ENCODE measurements at regions of chr18 and their contacts with region 1.

Region 1: DNA sequence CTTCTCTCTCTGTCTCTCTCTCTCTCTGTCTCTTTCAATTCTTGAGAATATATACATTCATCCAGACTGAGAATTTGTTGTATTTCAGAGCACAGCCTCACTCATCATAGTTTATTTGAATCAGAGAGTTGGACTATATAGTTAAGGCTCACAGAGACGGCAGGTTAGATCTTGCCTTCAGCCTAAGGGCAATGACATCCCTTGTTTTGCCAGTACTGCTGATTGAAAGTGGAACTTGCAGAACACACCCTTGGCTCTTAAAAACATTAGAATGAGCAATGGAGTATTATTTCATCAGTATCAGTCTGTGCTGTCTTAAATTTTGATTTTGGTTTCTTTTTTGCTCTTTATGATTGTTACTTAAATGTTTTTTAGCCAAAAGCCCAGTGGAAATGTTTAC is 62.0 kb upstream of the DSG1 start:
- DNase-seq: no peak
- CTCF ChIP-seq: no peak

Region 2: DNA sequence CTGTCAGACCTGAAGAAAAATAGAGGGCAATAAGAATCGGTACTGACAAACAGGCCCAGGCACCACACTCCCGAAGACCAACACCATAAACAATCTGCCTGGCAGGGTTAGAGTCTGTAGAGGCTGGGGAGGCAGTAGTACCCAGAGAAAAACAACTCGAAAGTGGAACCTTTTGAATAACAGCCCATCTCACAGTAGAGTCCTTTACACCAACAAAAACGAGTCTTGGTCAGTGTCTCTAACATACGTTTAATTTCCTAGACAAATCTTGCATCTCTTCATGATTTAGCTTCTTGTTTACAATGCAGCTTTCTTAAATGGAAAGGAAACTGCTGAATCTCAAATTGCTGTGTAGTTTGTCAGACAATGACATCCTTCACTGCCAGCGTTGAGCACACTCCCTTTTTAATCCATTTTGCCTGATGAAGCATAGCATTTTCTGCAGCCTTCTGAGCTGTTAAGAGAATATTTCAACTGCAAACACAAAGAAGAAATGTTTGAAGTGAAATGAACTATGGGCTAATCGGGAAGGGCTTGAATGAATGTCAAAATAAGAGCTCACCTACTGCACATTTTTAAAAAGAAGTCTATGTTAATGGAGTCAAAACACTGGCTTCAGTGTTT is 11.1 kb before region 1 on chr18:
- CTCF ChIA-PET with region 1: interaction called, 11 read pairs
- POLR2A ChIA-PET with region 1: no interaction called
- DNase-seq: no peak
- CTCF ChIP-seq: no peak